Activated CD8-positive, alpha-beta T cell treated with anti-CD3 and anti-CD28 coated beads for 36 hours (primary cell): ENCODE measurements at regions of chr1 and their contacts with region 1.

Region 1: DNA sequence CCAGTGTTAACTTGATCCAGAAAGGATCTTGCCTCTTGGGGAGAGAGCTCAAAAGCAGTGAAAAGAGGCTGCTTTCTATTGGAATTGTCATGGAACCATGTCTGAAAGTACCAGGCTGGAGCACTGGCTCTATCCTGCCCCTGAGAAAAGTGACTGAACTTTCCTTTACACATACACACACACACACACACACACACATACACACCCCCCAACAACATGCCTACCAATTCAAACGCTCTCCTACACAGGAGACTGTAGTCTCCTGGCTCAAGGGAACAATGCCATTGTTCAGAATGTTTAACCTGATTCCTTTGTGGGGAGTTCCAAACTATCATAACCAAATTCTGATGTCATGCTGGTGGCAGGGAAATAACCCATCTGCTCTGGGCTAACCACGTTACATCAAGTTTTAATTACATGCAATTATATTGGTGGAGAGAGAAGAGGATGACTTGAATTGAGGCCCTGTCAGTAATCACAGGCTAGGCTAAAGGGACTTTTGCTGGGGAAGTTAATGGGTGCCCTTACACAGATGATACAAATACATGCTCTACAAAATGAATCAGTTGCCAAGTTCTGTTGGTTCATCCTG is 52.3 kb upstream of the DUSP10 start:
- DNase-seq: peak; percentile 71
- ATAC-seq: peak; percentile 89
- H3K4me3 Mint-ChIP-seq: peak overlapping the region; percentile 18
- H3K27ac Mint-ChIP-seq: peak overlapping the region; percentile 88
- H3K4me1 Mint-ChIP-seq: peaks cover 45% of the 10 kb centered on the region
- H3K27me3 Mint-ChIP-seq: no peaks in the 10 kb centered on the region
- CTCF ChIP-seq: no peak

Region 2: GRCh38 chr1:221783936-221784335 is 10.2 kb before region 1 on chr1:
- CTCF ChIA-PET with region 1: interaction called, 4 read pairs
- POLR2A ChIA-PET with region 1: interaction called, 12 read pairs
- intact Hi-C with region 1: loop called (anchors 1 kb)
- DNase-seq: peak; percentile 36
- ATAC-seq: peak; percentile 78
- H3K4me3 Mint-ChIP-seq: peak overlapping the region; percentile 2
- H3K27ac Mint-ChIP-seq: no peak overlapping the region
- H3K4me1 Mint-ChIP-seq: peaks cover 54% of the 10 kb centered on the region
- H3K27me3 Mint-ChIP-seq: no peaks in the 10 kb centered on the region
- CTCF ChIP-seq: no peak